GM23248 (cell line): ENCODE measurements at regions of chr2 and their contacts with region 1.

Region 1: DNA sequence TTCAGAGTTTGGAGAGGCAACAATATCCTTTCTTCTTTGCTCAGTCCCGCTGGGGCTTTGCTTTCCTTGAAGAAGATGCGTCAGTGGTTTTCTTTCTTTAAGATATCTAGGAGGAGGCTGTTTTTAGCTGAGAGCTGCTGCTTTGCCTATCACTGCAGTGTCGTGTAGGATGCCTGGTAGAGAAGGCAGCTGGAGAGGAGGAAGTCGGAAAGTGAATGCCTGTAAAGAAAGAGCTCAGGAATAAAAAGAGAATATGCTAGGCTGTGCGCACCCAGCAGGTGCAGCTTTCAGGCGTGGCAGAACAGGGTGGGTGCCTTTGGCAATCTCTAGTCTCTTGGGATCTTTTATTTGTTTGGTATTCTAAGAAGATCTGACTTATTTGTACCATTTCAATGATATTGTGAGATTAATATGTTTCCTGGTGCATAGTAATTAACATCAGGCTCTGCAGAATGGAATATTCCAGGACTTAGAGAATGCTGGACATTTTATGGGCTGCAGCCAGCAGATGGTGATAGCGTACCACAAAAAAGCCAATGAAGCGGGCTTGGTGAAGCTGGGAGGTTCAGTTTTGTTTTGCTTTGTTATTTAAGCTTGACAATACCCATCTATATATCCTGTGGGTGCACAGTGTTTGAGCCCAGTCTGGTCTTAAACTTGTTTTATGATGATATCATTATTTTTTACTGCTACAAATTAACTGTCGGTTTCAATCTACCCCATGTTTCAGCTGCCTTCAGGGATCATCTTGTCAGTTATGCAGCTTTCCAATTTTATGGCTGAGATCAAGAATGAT is 34.9 kb downstream of the CAVIN2 start:
- DNase-seq: peak; percentile 79
- H3K4me3 ChIP-seq: no peak overlapping the region
- H3K27ac ChIP-seq: no peak overlapping the region
- H3K4me1 ChIP-seq: no peaks in the 10 kb centered on the region
- H3K27me3 ChIP-seq: no peaks in the 10 kb centered on the region

Region 2: DNA sequence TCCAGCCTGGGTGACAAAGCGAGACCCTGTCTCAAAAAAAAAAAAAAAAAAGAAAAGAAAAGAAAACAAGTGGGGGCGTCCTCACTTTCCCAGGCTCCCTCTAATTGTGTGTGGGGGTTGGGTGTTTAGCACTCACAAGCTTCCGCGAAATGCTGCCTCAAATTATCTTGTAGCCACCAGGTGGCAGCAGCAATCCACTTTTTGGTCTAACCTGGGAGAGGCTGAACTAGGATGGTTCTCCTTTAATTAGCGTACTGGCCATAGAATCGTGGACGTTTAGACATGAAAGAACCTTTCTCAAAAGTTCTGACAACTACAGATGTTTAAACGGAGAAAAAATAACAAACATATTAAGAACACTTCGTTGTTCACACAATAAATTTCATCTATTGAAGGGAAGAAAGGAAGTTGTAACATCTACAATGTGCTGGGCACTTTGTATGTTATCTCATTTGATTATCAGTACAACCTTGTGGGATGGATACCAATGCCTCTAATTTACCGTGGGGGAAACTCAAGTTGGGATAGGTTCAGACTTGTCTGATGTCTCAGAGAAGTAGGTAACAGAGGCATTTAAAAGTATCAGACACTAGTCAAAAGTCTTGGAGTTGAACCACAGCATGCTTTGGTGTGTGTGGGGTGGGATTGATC is 256.8 kb before region 1 on chr2:
- in situ Hi-C with region 1: loop called (anchors 25 kb)
- DNase-seq: peak; percentile 82
- H3K4me3 ChIP-seq: no peak overlapping the region
- H3K27ac ChIP-seq: no peak overlapping the region
- H3K4me1 ChIP-seq: peaks cover 3% of the 10 kb centered on the region; the same call in 1 of the 2 replicates
- H3K27me3 ChIP-seq: no peaks in the 10 kb centered on the region

Region 3: DNA sequence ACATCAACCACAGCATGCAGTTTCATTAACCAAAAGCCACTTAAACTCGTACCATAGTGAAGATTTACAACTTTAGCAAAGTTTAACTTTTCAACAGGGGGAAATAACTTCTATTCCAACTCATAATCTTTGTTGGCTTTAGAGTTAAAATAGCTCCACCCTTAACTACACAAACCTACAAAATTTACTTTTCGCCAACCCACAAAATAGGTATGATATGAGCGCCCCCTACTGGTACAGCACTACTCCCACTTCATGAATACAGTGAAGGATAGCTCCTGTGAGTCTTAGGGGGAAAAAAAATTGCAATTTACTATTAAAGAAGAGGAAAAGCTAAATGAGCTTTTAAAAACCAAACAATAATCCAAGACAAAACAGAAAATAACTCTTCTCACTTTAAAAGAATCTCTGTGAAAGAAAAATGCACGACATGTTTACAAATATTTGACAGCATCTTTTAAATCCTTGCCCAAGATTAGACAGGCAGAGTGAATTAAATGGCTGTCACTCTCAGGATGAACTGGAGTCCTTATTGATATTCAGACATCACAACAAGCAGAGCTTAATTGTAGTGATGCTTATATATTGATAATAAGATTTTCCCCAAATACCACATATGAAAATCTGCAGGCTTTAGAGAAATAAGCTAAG is 350.5 kb after region 1 on chr2:
- in situ Hi-C with region 1: loop called (anchors 5 kb)
- DNase-seq: peak; percentile 78
- H3K4me3 ChIP-seq: 0 out of 2 replicates have a peak overlapping the region, but pooled peaks have one; percentile 28
- H3K27ac ChIP-seq: no peak overlapping the region
- H3K4me1 ChIP-seq: peaks cover 9% of the 10 kb centered on the region; the same call in 1 of the 2 replicates
- H3K27me3 ChIP-seq: no peaks in the 10 kb centered on the region

Region 4: GRCh38 chr2:192286093-192286701 is 474.2 kb after region 1 on chr2:
- in situ Hi-C with region 1: loop called (anchors 25 kb)
- DNase-seq: peak; percentile 68
- H3K4me3 ChIP-seq: no peak overlapping the region
- H3K27ac ChIP-seq: no peak overlapping the region
- H3K4me1 ChIP-seq: no peaks in the 10 kb centered on the region
- H3K27me3 ChIP-seq: no peaks in the 10 kb centered on the region